Endothelial cell of umbilical vein (primary cell): ENCODE measurements at regions of chr1 and their contacts with region 1.

Region 1: GRCh38 chr1:162357681-162358266 is 18.9 kb downstream of the SPATA46 start:
- DNase-seq: peak; percentile 22
- H3K4me3 ChIP-seq: no peak overlapping the region
- H3K27ac ChIP-seq: no peak overlapping the region
- H3K4me1 ChIP-seq: peaks cover 7% of the 10 kb centered on the region
- H3K27me3 ChIP-seq: no peaks in the 10 kb centered on the region
- CTCF ChIP-seq: peak; percentile 39 to 52
- POLR2A ChIP-seq: no peak

Region 2: DNA sequence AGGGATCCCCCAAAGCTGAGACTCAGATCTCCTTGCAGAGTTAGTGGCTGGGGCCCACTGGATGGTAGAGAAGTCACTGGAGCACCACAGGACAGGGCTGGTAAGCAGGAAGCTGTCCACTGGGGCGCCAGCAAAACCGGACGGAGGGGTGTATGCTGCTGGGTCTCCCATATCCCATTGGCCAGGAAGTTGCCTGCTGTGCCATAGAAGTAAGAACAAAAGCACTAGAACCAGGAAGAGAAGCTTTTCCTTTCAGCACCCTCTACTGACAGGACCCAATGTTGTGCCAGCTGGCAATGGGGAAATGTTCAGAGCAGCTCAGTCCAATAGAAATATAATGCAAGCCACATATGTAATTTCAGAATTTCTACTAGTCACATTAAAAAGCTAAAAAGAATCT is 127.7 kb before region 1 on chr1:
- CTCF ChIA-PET with region 1: interaction called, 10 read pairs
- POLR2A ChIA-PET with region 1: no interaction called
- dilution Hi-C with region 1: no loop called
- intact Hi-C with region 1: no loop called
- DNase-seq: peak; percentile 72
- H3K4me3 ChIP-seq: no peak overlapping the region
- H3K27ac ChIP-seq: no peak overlapping the region
- H3K4me1 ChIP-seq: peaks cover 3% of the 10 kb centered on the region
- H3K27me3 ChIP-seq: no peaks in the 10 kb centered on the region
- CTCF ChIP-seq: peak in 1 of 2 donors; percentile 39
- POLR2A ChIP-seq: no peak

Region 3: DNA sequence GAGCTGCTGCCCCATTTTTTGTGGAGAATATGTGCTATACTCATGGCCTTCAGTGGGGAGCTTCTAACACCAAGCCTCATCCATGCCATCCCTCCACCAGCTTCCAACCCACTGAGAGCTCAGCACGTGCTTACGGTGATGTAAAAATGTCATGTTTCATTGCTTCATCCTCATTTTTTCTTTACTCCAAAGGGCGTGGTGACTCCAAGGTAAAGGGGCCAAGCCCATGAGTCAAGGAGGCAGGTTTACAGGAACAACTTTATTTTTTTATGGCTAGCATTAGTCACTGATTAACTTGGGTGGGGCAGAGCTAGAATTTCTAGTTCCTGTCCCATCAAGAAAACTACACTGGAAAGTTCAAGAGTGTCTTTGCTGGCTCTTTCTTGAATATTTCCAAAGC is 23.6 kb after region 1 on chr1 and contains the start of gene C1orf226:
- CTCF ChIA-PET with region 1: interaction called, 14 read pairs
- POLR2A ChIA-PET with region 1: no interaction called
- dilution Hi-C with region 1: no loop called
- intact Hi-C with region 1: no loop called
- DNase-seq: no peak
- H3K4me3 ChIP-seq: no peak within 1 kb of the TSS
- H3K27ac ChIP-seq: no peak within 1 kb of the TSS
- H3K4me1 ChIP-seq: no peaks in the 10 kb centered on the region
- H3K27me3 ChIP-seq: no peaks in the 10 kb centered on the region
- CTCF ChIP-seq: no peak
- POLR2A ChIP-seq: no peak
- total RNA-seq, gene C1orf226: 3.8 and 4.2 TPM in 2 replicates

Region 4: DNA sequence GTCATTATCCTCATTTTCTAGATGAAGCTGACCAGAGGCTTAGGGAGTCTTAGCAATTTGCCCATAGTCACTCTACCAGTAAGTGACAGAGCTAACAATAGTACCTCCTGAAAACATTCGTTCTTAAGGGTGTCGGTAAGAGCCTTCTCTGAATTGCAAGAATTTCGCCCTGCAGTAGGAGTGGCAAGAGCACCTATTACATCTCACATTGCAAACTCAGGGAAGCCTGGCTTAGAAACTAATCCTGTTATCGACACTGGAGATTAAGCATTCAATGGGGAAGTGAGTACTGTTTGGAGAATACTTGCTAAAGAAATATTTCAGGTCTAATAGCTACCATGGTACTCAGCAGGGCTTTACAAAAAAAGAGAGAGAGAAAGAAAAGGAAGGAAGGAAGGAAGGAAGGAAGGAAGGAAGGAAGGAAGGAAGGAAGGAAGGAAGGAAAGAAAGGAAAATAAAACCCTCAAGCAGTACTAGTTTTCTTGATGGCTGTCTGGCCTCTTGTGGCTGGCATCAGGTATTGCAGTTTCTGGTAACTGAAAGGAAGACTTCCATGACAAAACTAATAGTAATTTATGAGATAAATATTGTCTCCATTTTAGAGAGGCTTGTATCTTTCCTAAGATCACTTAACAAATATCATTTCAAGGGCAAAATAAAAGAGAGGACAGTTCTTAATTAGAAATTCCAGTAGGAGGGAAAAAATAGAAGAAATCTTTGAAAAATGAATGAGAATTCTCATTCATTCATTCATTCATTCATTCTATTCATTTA is 34.2 kb after region 1 on chr1:
- CTCF ChIA-PET with region 1: interaction called, 26 read pairs
- POLR2A ChIA-PET with region 1: no interaction called
- dilution Hi-C with region 1: no loop called
- intact Hi-C with region 1: loop called (anchors 1 kb)
- DNase-seq: peak; percentile 43
- H3K4me3 ChIP-seq: no peak overlapping the region
- H3K27ac ChIP-seq: no peak overlapping the region
- H3K4me1 ChIP-seq: no peaks in the 10 kb centered on the region
- H3K27me3 ChIP-seq: peaks cover 0 to 6% of the 10 kb centered on the region in 2 experiments
- CTCF ChIP-seq: peak; percentile 64 to 70
- POLR2A ChIP-seq: no peak

Region 5: GRCh38 chr1:162471290-162471853 is 113.6 kb after region 1 on chr1:
- CTCF ChIA-PET with region 1: no interaction called
- POLR2A ChIA-PET with region 1: no interaction called
- dilution Hi-C with region 1: no loop called
- intact Hi-C with region 1: no loop called
- DNase-seq: no peak
- H3K4me3 ChIP-seq: no peak overlapping the region
- H3K27ac ChIP-seq: no peak overlapping the region
- H3K4me1 ChIP-seq: no peaks in the 10 kb centered on the region
- H3K27me3 ChIP-seq: peaks cover 0 to 5% of the 10 kb centered on the region in 2 experiments
- CTCF ChIP-seq: no peak
- POLR2A ChIP-seq: no peak

Region 6: DNA sequence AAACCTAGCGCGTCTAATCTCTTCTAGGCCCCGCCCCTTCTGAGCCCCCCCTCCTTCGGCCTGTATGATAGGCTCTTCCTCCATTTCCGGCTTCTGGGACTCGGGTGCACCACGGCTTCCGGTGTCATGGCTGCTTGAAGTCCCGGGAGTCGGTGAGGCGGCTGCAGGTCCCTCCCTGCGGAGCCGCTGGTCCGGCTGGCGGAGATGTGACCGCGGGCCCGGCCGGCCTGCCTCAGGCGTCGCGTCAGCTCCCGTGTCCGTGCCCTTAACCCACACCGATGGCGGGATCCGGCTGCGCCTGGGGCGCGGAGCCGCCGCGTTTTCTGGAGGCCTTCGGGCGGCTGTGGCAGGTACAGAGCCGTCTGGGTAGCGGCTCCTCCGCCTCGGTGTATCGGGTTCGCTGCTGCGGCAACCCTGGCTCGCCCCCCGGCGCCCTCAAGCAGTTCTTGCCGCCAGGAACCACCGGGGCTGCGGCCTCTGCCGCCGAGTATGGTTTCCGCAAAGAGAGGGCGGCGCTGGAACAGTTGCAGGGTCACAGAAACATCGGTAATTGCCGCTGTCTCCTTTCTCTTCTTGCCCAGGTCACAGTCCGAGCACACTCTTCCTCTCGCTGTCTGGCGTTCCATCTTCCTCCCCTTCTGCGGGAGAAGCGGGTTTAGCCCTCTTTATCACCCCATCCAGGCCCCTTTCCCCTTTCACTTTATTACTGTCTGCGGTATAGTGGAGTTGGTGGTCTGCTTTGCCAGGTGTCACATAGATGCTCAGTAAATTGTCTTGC is 140.1 kb after region 1 on chr1 and contains the start of gene UHMK1:
- CTCF ChIA-PET with region 1: interaction called, 3 read pairs
- POLR2A ChIA-PET with region 1: no interaction called
- dilution Hi-C with region 1: no loop called
- intact Hi-C with region 1: loop called (anchors 1 kb)
- DNase-seq: peak; percentile 92
- H3K4me3 ChIP-seq: peak within 1 kb of the TSS; percentile 47 to 96 (median 78)
- H3K27ac ChIP-seq: peak within 1 kb of the TSS; percentile 73
- H3K4me1 ChIP-seq: peaks cover 14% of the 10 kb centered on the region
- H3K27me3 ChIP-seq: no peaks in the 10 kb centered on the region
- CTCF ChIP-seq: no peak
- POLR2A ChIP-seq: peak; percentile 94
- total RNA-seq, gene UHMK1: 35.0 and 35.1 TPM in 2 replicates

Region 7: GRCh38 chr1:162502928-162503327 is 145.2 kb after region 1 on chr1:
- CTCF ChIA-PET with region 1: interaction called, 11 read pairs
- POLR2A ChIA-PET with region 1: no interaction called
- dilution Hi-C with region 1: no loop called
- intact Hi-C with region 1: loop called (anchors 1 kb)
- DNase-seq: no peak
- H3K4me3 ChIP-seq: no peak overlapping the region
- H3K27ac ChIP-seq: no peak overlapping the region
- H3K4me1 ChIP-seq: peaks cover 10% of the 10 kb centered on the region
- H3K27me3 ChIP-seq: no peaks in the 10 kb centered on the region
- CTCF ChIP-seq: no peak
- POLR2A ChIP-seq: no peak

Region 8: DNA sequence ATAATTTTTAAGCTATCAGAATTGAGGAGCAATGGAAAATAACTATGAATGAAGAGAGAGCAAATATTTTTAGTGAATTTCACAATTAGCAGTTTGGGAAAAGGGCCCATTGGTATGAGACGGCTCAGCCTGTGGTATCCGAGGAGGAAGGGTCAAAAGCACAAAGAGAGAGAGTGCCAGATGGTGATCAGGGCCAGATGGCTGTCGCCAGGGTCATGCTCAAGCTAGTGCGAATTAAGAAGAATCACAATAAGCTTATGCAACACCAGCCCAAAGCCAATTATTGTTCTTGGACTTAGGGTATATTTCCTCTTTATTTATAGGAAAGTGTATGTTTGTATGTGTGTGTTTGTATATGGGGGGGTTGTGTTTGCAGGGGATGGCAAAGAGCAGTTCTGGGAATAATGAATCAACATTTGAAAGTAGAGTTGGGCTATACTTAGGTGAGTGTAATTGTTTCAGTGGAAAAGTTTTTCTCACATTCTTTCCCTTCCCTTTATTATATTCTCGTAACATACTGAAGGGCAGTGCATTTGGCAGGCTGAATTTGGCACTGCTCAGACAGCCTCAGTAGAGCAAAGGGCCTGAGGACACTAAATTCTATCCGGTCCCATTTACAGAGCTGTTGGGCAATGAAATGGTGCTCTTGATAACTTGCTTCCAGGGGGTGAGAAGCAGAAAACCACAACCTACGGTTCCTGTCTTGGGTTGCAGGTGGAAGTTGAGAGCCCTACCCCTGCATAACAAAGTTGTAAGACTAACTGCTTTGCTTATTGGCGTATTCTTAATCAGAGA is 255.0 kb after region 1 on chr1:
- CTCF ChIA-PET with region 1: interaction called, 16 read pairs
- POLR2A ChIA-PET with region 1: no interaction called
- dilution Hi-C with region 1: no loop called
- intact Hi-C with region 1: no loop called
- DNase-seq: peak; percentile 33
- H3K4me3 ChIP-seq: no peak overlapping the region
- H3K27ac ChIP-seq: no peak overlapping the region
- H3K4me1 ChIP-seq: no peaks in the 10 kb centered on the region
- H3K27me3 ChIP-seq: no peaks in the 10 kb centered on the region
- CTCF ChIP-seq: no peak
- POLR2A ChIP-seq: no peak